Activated B cell treated with CpG ODN at 0.5 μM for 24 hours (primary cell): ENCODE measurements at regions of chr20 and their contacts with region 1.

Region 1: GRCh38 chr20:38748097-38748860 is at the start of gene ACTR5:
- DNase-seq: peak; percentile 96
- ATAC-seq: peak; percentile 92
- H3K4me3 Mint-ChIP-seq: peak within 1 kb of the TSS; percentile 97
- H3K27ac Mint-ChIP-seq: peak within 1 kb of the TSS; percentile 99
- H3K4me1 Mint-ChIP-seq: peaks cover 27% of the 10 kb centered on the region
- H3K27me3 Mint-ChIP-seq: peaks cover 7% of the 10 kb centered on the region
- CTCF ChIP-seq: no peak
- total RNA-seq, gene ACTR5: 12.8 and 13.7 TPM in 2 replicates

Region 2: DNA sequence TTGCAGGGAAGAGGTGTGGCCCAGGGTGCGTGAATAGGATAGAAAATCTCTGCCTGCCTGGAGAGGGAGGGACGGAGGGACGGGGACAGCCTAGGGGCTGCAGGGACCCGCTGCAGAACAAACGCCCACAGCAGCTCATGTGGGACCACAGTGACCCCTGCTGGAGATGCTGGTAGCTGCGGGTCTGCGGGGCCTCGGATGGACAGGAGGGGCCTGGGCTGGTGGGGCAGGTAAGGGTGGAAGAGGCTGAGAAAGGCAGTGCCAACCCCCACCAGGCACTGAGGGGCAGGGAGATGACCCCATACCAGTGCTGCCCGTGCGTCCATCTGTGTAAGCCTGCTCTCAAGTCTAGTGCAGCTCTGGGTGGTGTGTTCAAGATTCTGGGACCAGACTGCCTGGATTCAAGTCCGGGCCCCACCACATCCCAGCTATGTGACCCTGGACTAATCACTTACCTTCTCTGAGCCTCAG is 527.1 kb before region 1 on chr20:
- CTCF ChIA-PET with region 1: no interaction called
- POLR2A ChIA-PET with region 1: no interaction called
- intact Hi-C with region 1: loop called (anchors 10 kb)
- DNase-seq: peak; percentile 72
- ATAC-seq: peak; percentile 93
- H3K4me3 Mint-ChIP-seq: no peak overlapping the region
- H3K27ac Mint-ChIP-seq: no peak overlapping the region
- H3K4me1 Mint-ChIP-seq: peaks cover 3% of the 10 kb centered on the region
- H3K27me3 Mint-ChIP-seq: peaks cover 4% of the 10 kb centered on the region
- CTCF ChIP-seq: peak; percentile 37

Region 3: GRCh38 chr20:38343311-38344106 is 404.8 kb before region 1 on chr20:
- CTCF ChIA-PET with region 1: no interaction called
- POLR2A ChIA-PET with region 1: no interaction called
- intact Hi-C with region 1: no loop called
- DNase-seq: no peak
- ATAC-seq: no peak
- H3K4me3 Mint-ChIP-seq: no peak overlapping the region
- H3K27ac Mint-ChIP-seq: no peak overlapping the region
- H3K4me1 Mint-ChIP-seq: no peaks in the 10 kb centered on the region
- H3K27me3 Mint-ChIP-seq: peaks cover 12% of the 10 kb centered on the region
- CTCF ChIP-seq: no peak

Region 4: GRCh38 chr20:38633577-38634093 is 114.6 kb before region 1 on chr20:
- CTCF ChIA-PET with region 1: interaction called, 10 read pairs
- POLR2A ChIA-PET with region 1: no interaction called
- intact Hi-C with region 1: loop called (anchors 1 kb)
- DNase-seq: peak; percentile 31
- ATAC-seq: peak; percentile 96
- H3K4me3 Mint-ChIP-seq: no peak overlapping the region
- H3K27ac Mint-ChIP-seq: no peak overlapping the region
- H3K4me1 Mint-ChIP-seq: peaks cover 3% of the 10 kb centered on the region
- H3K27me3 Mint-ChIP-seq: peaks cover 13% of the 10 kb centered on the region
- CTCF ChIP-seq: peak; percentile 69

Region 5: DNA sequence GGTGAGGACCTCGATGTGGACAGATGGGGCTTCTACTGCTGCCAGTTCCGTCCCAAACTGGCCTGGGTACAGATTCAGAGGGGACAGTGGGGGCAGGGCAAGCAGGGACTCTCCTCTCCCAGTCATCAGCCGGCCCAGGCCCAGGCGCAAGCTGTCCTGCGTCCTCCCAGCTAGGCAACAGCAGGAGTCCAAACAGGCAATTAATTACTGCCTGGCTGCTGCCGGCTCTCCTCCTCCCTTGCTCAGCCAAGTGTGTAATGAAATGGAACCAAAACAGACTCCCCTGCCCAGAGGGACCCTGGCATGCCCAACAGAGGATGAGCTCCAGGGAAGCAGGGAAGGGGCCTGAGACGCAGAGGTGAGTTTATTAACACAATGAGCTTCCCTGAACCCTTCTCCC is 41.8 kb before region 1 on chr20:
- CTCF ChIA-PET with region 1: no interaction called
- POLR2A ChIA-PET with region 1: no interaction called
- intact Hi-C with region 1: no loop called
- DNase-seq: no peak
- ATAC-seq: no peak
- H3K4me3 Mint-ChIP-seq: no peak overlapping the region
- H3K27ac Mint-ChIP-seq: no peak overlapping the region
- H3K4me1 Mint-ChIP-seq: no peaks in the 10 kb centered on the region
- H3K27me3 Mint-ChIP-seq: peaks cover 44% of the 10 kb centered on the region
- CTCF ChIP-seq: no peak

Region 6: GRCh38 chr20:38790200-38791053 is 42.1 kb after region 1 on chr20:
- CTCF ChIA-PET with region 1: interaction called, 13 read pairs
- POLR2A ChIA-PET with region 1: no interaction called
- intact Hi-C with region 1: no loop called
- DNase-seq: no peak
- ATAC-seq: peak; percentile 81
- H3K4me3 Mint-ChIP-seq: peak overlapping the region; percentile 26
- H3K27ac Mint-ChIP-seq: no peak overlapping the region
- H3K4me1 Mint-ChIP-seq: peaks cover 4% of the 10 kb centered on the region
- H3K27me3 Mint-ChIP-seq: no peaks in the 10 kb centered on the region
- CTCF ChIP-seq: peak; percentile 30

Region 7: DNA sequence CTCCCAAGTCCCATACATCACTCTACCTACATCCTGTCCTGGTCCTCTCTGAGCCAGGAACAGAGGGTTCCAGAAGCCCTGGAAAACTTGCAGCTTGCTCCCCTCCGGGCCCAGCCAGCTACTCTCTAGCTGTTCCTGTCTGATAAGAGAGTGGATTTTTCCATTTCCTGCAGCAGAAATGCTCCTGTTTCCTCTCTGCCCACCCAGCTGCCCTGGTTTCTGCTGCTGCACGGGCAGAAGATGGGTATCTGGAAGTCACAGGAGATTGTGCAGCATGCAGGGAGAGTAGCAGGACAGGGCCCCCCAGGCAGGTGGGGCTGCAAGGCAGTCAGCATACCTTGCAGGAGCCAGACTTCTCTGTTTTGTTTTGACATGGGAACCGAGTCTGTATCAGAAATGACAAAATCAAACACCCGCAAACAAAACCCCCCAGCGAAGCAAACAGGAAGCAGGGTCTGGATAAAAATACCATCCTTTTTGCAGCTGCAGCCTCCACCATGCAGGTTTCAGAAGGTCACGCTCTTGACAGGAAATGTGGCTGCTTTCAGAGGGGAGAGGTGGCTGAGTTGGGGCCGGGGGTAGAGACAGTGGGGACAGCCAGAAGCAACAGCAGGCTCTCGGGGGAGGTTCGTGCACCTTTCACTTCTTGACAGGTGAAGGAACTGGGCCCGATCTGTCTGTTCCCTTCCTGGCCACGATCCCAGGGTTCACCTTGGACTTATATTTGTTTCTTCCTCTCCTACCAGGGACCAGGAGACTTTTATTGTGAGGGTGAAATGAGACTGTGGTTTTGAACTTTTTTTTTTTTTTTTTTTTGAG is 127.1 kb after region 1 on chr20:
- CTCF ChIA-PET with region 1: no interaction called
- POLR2A ChIA-PET with region 1: interaction called, 6 read pairs
- intact Hi-C with region 1: loop called (anchors 1 kb)
- DNase-seq: peak; percentile 60
- ATAC-seq: peak; percentile 63
- H3K4me3 Mint-ChIP-seq: peak overlapping the region; percentile 83
- H3K27ac Mint-ChIP-seq: peak overlapping the region; percentile 97
- H3K4me1 Mint-ChIP-seq: peaks cover 98% of the 10 kb centered on the region
- H3K27me3 Mint-ChIP-seq: no peaks in the 10 kb centered on the region
- CTCF ChIP-seq: no peak

Region 8: GRCh38 chr20:38926142-38926933 is 178.1 kb after region 1 on chr20 and contains the start of gene FAM83D:
- CTCF ChIA-PET with region 1: interaction called, 4 read pairs
- POLR2A ChIA-PET with region 1: no interaction called
- intact Hi-C with region 1: loop called (anchors 1 kb)
- DNase-seq: peak; percentile 86
- ATAC-seq: peak; percentile 95
- H3K4me3 Mint-ChIP-seq: peak within 1 kb of the TSS; percentile 77
- H3K27ac Mint-ChIP-seq: peak within 1 kb of the TSS; percentile 65
- H3K4me1 Mint-ChIP-seq: peaks cover 12% of the 10 kb centered on the region
- H3K27me3 Mint-ChIP-seq: peaks cover 3% of the 10 kb centered on the region
- CTCF ChIP-seq: no peak
- total RNA-seq, gene FAM83D: 0.93 and 1.2 TPM in 2 replicates